ENCODE measurements at regions of chr12 and their contacts with region 1.

Region 1: DNA sequence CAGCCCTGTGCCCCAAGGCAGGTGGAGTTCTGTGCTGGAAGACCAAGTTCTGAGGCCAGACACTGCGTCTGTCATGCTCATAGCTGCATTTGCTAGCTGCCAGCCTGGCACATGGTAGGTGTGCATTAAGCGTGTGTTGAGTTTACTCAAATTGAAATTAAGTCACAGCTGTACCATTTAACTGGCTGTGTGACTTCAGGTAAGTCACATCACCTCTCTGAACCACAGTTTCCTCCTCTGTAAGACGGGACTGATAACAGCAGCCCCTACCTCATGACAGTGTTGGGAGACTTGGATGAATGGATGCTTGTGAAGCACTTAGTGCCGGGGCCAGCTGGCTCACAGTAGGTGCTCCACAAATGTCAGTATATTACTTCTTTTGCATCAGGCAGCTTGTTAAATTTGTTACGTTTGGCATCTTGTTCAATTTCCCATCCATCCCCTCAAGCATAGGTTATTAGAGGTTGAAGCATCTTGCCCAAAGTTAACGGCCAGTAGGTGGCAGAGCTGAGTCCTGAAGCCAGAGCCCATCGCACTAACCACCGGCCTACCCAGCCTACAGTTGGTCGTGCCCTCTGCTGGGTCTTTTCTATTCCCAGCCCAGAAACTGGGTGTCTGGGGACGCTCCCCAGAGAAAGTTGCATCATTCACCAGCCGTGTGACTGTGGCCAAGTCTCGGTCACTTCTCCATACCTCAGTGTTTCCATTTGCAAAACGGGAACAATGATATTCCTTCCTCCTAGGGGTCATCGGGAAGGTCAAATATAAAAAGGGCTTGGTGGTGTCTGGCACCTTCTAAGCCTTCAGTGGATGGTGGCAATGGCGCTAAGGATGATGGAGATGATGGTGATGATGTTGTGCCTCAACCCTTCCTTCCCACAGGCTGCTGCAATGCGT is 4.5 kb downstream of the DAO start:
- DNase-seq: peak; percentile 92 to 96 (median 96)
- H3K4me3 ChIP-seq: no peak overlapping the region
- H3K4me3 Mint-ChIP-seq: peak overlapping the region in 1 of 2 donors; percentile 1
- H3K27ac ChIP-seq: peak overlapping the region; percentile 8 to 30
- H3K27ac Mint-ChIP-seq: peak overlapping the region; percentile 50 to 82 (median 68)
- H3K4me1 ChIP-seq: peaks cover 14 to 16% of the 10 kb centered on the region in 2 donors
- H3K4me1 Mint-ChIP-seq: peaks cover 11% of the 10 kb centered on the region
- H3K27me3 ChIP-seq: no peaks in the 10 kb centered on the region
- H3K27me3 Mint-ChIP-seq: peaks cover 0 to 10% (median 2%) of the 10 kb centered on the region in 3 donors
- CTCF ChIP-seq: peak; percentile 85

Region 2: GRCh38 chr12:108720757-108721514 is 163.4 kb before region 1 on chr12:
- intact Hi-C with region 1: no loop called
- DNase-seq: peak in 1 of 3 donors; percentile 41
- H3K4me3 ChIP-seq: peak overlapping the region in 1 of 3 experiments; percentile 60
- H3K4me3 Mint-ChIP-seq: no peak overlapping the region
- H3K27ac ChIP-seq: peak overlapping the region; percentile 89 to 99
- H3K27ac Mint-ChIP-seq: peak overlapping the region; percentile 94 to 99 (median 98)
- H3K4me1 ChIP-seq: peaks cover 62% of the 10 kb centered on the region in 2 donors
- H3K4me1 Mint-ChIP-seq: peaks cover 76% of the 10 kb centered on the region
- H3K27me3 ChIP-seq: no peaks in the 10 kb centered on the region
- H3K27me3 Mint-ChIP-seq: no peaks in the 10 kb centered on the region
- CTCF ChIP-seq: no peak

Region 3: GRCh38 chr12:108915632-108916133 is 31.3 kb after region 1 on chr12:
- intact Hi-C with region 1: loop called in 1 of 2 experiments (anchors 5 kb)
- DNase-seq: no peak
- H3K4me3 ChIP-seq: no peak overlapping the region
- H3K4me3 Mint-ChIP-seq: no peak overlapping the region
- H3K27ac ChIP-seq: no peak overlapping the region
- H3K27ac Mint-ChIP-seq: peak overlapping the region in 3 of 7 donors; percentile 15 to 41 (median 20)
- H3K4me1 ChIP-seq: peaks cover 17 to 22% of the 10 kb centered on the region in 2 donors
- H3K4me1 Mint-ChIP-seq: peaks cover 22% of the 10 kb centered on the region
- H3K27me3 ChIP-seq: no peaks in the 10 kb centered on the region
- H3K27me3 Mint-ChIP-seq: peaks cover 0 to 7% (median 2%) of the 10 kb centered on the region in 3 donors
- CTCF ChIP-seq: no peak

Measured in CD14-positive monocyte (primary cell).